HepG2 (cell line): ENCODE measurements at regions of chr9 and their contacts with region 1.

Region 1: DNA sequence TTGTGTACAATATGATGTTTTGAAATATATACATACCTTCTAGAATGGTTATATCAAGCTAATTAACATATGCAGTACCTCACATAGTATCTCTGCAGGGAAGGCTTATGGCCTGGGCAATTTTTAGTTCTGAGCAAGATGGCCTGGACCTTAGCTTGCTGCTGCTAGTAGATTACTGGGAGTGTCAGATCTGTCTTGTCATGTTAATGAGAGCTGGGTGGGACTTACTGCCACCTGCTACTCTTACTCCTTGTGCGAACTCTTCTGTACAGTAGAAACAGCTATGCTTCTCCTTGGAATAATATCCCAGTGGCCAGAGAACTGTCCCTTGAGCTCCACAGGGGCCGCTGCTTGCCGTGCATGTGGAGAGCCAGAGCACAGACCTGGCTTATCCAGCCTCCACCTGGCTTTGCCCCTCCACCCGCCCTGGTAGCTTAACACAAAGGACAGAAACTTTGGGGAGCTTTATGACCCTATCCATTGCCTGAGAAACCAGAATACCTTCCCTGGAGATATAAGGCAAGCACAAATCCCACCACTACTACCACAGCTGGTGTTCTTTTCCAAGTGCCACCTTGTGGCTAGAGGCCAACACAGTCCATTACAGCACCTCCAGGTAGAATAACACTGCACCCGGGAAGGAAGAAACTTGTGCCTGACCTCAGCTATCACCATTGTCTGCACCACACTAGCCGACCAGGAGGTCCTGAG is 74.4 kb upstream of the RUSC2 start:
- DNase-seq: peak; percentile 41
- ATAC-seq: peak; percentile 98
- H3K4me3 ChIP-seq: no peak overlapping the region
- H3K27ac ChIP-seq: no peak overlapping the region
- H3K4me1 ChIP-seq: peaks cover 19% of the 10 kb centered on the region
- H3K27me3 ChIP-seq: no peaks in the 10 kb centered on the region
- CTCF ChIP-seq: peak; percentile 58
- EP300 ChIP-seq: no peak
- POLR2A ChIP-seq: no peak
- RAD21 ChIP-seq: no peak

Region 2: DNA sequence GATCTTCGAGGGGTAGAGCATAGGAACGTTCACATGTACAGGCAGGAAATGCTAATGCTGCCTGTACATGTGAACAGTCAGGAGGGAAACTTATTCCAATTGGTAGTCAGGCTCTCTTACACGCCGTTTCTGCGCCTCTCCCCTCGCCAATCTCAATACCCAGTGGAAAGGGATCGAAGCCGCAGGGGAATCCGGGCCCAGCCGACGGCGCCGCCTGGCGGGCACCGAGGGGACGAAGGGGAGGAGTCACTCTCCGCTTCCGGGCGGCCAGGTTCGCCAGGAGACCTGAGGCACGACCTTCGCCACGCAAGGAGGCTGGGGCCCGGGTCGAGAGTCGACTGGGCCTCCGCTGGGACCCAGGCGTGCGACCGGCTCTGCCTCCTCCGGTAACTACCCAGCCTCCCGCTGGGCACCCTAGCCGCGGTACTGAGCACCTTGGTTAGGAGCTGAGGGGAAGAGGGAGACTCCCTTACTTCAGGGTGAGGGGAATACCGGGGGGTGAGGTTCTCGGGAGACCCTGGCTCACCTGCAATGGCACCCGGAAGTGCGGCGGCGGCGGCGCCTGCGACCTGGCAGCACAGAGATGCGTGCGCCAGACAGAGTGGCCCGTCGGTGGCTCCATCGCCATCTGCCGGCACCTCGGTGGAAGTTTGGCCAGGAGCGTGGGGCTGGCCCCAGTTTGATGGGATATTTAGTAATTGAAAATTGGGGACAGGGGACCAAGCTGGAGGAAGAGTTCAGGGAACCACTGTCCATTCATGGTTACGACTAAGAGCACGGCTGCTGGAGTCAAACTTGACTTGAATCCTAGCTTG is 319.3 kb before region 1 on chr9 and contains the start of gene PIGO:
- CTCF ChIA-PET with region 1: no interaction called
- POLR2A ChIA-PET with region 1: no interaction called
- in situ Hi-C with region 1: no loop called
- intact Hi-C with region 1: no loop called
- DNase-seq: peak; percentile 83
- ATAC-seq: peak; percentile 93
- H3K4me3 ChIP-seq: peak within 1 kb of the TSS; percentile 77 to 91 (median 83)
- H3K27ac ChIP-seq: peak within 1 kb of the TSS; percentile 98
- H3K4me1 ChIP-seq: peaks cover 26% of the 10 kb centered on the region
- H3K27me3 ChIP-seq: no peaks in the 10 kb centered on the region
- CTCF ChIP-seq: peak; percentile 81
- EP300 ChIP-seq: 0 out of 4 replicates have a peak, but pooled peaks of 1 of the 2 experiments have one; percentile 42
- POLR2A ChIP-seq: peak; percentile 95 to 96
- RAD21 ChIP-seq: peak; percentile 81
- total RNA-seq, gene PIGO: 6.6 and 20.5 TPM in 2 replicates

Region 3: GRCh38 chr9:35367451-35367850 is 48.1 kb before region 1 on chr9:
- CTCF ChIA-PET with region 1: no interaction called
- POLR2A ChIA-PET with region 1: no interaction called
- in situ Hi-C with region 1: no loop called
- intact Hi-C with region 1: no loop called
- DNase-seq: no peak
- ATAC-seq: no peak
- H3K4me3 ChIP-seq: no peak overlapping the region
- H3K27ac ChIP-seq: no peak overlapping the region
- H3K4me1 ChIP-seq: 0 out of 2 replicates have a peak, but pooled peaks cover 6% of the 10 kb centered on the region
- H3K27me3 ChIP-seq: no peaks in the 10 kb centered on the region
- CTCF ChIP-seq: no peak
- EP300 ChIP-seq: no peak
- POLR2A ChIP-seq: no peak
- RAD21 ChIP-seq: no peak

Region 4: DNA sequence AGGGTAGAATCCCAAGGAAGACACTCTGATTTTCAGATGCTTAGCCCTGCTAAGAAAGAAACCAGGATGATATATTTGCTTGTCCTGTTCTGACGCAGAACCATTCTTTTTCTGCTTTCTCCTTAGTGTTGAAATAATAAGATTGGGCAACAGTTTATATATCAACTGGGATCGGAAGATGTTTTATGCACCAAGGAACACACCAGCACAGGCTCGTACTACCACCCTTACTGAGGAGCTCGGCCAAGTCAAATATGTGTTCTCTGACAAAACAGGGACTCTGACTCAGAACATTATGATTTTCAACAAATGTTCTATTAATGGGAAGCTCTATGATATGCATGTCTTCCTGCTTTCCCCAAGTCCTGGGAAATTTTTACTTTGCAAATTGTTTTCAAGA is 55.4 kb after region 1 on chr9:
- CTCF ChIA-PET with region 1: no interaction called
- POLR2A ChIA-PET with region 1: no interaction called
- in situ Hi-C with region 1: no loop called
- intact Hi-C with region 1: loop called (anchors 10 kb)
- DNase-seq: no peak
- ATAC-seq: no peak
- H3K4me3 ChIP-seq: no peak overlapping the region
- H3K27ac ChIP-seq: no peak overlapping the region
- H3K4me1 ChIP-seq: peaks cover 8% of the 10 kb centered on the region; the same call in 1 of the 2 replicates
- H3K27me3 ChIP-seq: peaks cover 0 to 1% of the 10 kb centered on the region in 2 experiments; a peak in 1 of 5 replicates
- CTCF ChIP-seq: no peak
- EP300 ChIP-seq: no peak
- POLR2A ChIP-seq: no peak
- RAD21 ChIP-seq: no peak